ENCODE measurements at regions of chr2 and their contacts with region 1.

Region 1: DNA sequence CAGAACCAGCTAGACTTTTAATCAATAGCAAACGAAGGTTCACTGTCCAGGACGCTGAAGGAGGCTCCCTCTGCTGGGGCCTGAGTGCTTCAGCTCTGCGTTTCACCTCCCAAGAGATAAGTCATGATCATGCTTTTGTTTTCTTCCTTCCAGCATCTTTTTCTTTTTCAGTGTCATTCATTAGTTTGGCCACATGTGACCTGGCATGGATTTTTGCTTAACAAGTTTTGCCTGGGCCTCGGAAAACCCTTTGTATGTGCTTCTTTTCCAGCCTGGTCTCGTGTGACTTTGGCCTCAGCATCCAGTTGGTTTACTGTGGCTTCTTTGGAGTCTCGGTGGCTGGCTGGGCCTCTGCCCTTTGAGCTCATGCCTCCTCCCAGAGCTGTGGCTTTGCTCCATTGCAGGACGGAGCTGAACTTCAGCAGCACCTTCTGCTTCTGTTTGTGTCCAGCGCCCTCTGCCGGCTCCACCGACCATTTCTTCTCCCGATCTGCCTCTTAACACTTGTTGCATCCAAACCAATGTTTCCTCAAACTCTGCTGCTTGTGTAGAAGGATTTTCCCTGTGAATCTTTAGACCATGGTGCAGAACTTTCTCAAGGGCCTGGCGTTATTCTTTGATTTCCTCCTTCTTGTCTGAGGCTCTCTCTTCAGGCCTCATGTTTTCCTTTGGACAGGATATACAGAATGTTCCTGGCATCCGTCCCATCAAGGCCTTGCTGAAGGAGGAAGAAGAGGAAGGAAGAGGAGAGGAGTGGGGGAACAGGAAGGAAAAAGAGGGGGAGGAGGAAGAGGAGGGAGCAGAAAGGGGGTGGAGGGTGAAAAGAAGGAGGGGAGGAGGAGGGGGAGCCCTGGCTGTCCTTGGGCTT is 23.6 kb upstream of the HES6 start:
- DNase-seq: peak; percentile 51 to 83 (median 58)
- ATAC-seq: peak; percentile 95
- H3K4me3 ChIP-seq: no peak overlapping the region
- H3K27ac ChIP-seq: no peak overlapping the region
- H3K4me1 ChIP-seq: no peaks in the 10 kb centered on the region; a peak in 1 of 5 replicates
- H3K27me3 ChIP-seq: no peaks in the 10 kb centered on the region
- CTCF ChIP-seq: peak; percentile 77 to 79 (median 79)
- EP300 ChIP-seq: no peak
- POLR2A ChIP-seq: no peak
- RAD21 ChIP-seq: peak; percentile 66 to 81

Region 2: DNA sequence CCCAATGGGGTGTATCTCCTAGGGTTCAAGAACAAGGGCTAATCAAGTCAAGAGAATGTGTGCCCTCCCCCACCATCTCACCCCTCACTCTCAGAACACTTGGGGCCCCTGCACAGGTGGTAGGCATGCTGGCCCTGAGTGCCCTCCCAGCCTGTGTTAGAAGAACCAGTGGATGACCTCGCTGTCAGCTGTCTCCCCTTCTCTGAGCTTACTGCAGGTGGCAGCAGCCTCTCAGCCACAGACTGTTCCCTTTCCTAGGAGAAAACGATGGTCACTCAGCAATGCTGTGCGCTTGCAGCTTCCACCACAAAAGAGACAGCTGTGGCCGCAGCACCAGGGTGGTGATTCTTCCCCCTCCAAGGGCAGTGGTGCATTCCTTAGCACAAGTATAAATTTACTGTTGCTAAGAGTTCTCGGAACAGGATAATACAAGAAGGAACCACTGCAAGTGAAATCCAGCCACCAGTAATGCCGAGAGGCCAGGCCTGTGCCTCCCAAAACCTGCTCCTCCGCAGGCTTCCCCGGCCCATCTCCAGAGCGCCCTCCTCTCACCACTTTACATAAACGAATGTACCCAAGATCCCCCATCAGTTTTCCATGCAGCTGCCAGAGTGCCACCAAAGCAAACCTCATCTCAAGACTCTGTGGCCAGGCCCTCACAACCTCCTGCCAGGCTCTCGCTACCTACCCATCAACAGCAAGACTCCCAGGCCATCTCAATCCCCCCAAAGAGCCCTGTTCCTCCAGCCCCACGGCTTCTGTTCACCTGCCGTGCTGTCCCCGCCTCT is 404.9 kb before region 1 on chr2:
- CTCF ChIA-PET with region 1: interaction called, 13 read pairs
- POLR2A ChIA-PET with region 1: no interaction called
- in situ Hi-C with region 1: loop called (anchors 25 kb)
- intact Hi-C with region 1: loop called (anchors 5 kb)
- DNase-seq: peak; percentile 37 to 62 (median 48)
- ATAC-seq: peak; percentile 98
- H3K4me3 ChIP-seq: no peak overlapping the region
- H3K27ac ChIP-seq: no peak overlapping the region
- H3K4me1 ChIP-seq: peaks cover 0 to 8% of the 10 kb centered on the region in 2 experiments; a peak in 1 of 5 replicates
- H3K27me3 ChIP-seq: peaks cover 10 to 47% of the 10 kb centered on the region in 2 experiments; a peak in 4 of 5 replicates
- CTCF ChIP-seq: peak; percentile 64 to 78 (median 67)
- EP300 ChIP-seq: no peak
- POLR2A ChIP-seq: no peak
- RAD21 ChIP-seq: peak; percentile 83 to 88

Region 3: GRCh38 chr2:238158527-238159070 is 104.8 kb before region 1 on chr2 and contains the start of gene ERFE:
- CTCF ChIA-PET with region 1: interaction called, 21 read pairs
- POLR2A ChIA-PET with region 1: no interaction called
- in situ Hi-C with region 1: no loop called
- intact Hi-C with region 1: loop called (anchors 1 kb)
- DNase-seq: peak; percentile 74 to 89 (median 88)
- ATAC-seq: peak; percentile 77
- H3K4me3 ChIP-seq: peak within 1 kb of the TSS; percentile 54
- H3K27ac ChIP-seq: 0 out of 3 replicates have a peak within 1 kb of the TSS, but pooled peaks have one; percentile 49
- H3K4me1 ChIP-seq: peaks cover 0 to 52% of the 10 kb centered on the region in 2 experiments; a peak in 2 of 5 replicates
- H3K27me3 ChIP-seq: no peaks in the 10 kb centered on the region
- CTCF ChIP-seq: peak in 2 of 3 experiments; percentile 47 to 63; a peak in 4 of 6 replicates
- EP300 ChIP-seq: no peak
- POLR2A ChIP-seq: no peak
- RAD21 ChIP-seq: no peak
- polyA plus RNA-seq, gene ERFE: 0.55 to 1.1 TPM